ENCODE measurements at regions of chr21 and their contacts with region 1.

Region 1: DNA sequence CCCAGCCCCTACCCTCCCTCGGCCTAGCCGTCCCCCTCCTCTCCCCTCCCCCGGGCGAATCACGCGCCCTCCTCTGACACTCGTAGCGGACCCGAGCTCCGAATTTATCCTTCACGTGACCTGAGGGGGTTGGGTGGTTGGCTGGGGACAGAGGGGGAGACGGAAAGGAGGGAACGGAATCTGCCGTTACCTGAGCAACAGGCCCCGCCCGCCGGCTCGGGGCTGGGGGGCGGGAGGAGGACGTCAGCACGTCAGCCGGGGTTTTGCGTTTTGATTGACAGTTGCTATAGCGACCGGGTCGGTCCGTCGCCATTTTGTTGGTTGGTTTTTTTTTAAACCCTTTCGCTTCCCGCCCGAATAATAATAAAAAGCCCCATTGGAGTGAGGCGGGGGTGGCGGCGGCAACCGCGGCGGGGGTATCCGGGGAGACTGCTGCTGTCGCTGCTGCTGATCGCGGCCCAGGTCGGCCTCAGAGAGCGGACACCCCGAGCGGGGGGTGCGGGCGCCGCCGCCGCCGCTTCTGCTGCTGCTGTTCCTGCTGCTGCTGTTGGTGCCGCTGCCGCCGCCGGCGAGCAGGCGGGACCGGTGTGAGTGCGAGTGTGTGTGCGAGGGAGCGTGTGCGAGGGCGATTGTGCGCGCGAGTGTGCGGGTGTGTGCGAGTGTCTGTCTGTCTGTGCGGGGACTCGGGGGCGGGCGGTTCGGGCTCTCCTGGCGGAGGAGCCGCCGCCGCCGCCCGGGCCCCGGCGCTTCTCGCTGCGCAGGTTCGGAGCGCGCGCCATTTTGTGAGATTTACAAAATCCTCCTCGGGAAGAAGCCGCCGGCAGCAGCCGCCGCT is at the start of gene DYRK1A:
- DNase-seq: peak; percentile 98 to 100 (median 99)
- ATAC-seq: peak; percentile 89 to 93 (median 90)
- H3K4me3 ChIP-seq: peak within 1 kb of the TSS; percentile 75 to 90 (median 81)
- H3K27ac ChIP-seq: peak within 1 kb of the TSS; percentile 100
- H3K4me1 ChIP-seq: peaks cover 0 to 37% (median 12%) of the 10 kb centered on the region in 4 donors
- H3K27me3 ChIP-seq: no peaks in the 10 kb centered on the region
- CTCF ChIP-seq: no peak
- POLR2A ChIP-seq: peak; percentile 80
- total RNA-seq, gene DYRK1A: 20.6 to 32.5 (median 25.7) TPM

Region 2: DNA sequence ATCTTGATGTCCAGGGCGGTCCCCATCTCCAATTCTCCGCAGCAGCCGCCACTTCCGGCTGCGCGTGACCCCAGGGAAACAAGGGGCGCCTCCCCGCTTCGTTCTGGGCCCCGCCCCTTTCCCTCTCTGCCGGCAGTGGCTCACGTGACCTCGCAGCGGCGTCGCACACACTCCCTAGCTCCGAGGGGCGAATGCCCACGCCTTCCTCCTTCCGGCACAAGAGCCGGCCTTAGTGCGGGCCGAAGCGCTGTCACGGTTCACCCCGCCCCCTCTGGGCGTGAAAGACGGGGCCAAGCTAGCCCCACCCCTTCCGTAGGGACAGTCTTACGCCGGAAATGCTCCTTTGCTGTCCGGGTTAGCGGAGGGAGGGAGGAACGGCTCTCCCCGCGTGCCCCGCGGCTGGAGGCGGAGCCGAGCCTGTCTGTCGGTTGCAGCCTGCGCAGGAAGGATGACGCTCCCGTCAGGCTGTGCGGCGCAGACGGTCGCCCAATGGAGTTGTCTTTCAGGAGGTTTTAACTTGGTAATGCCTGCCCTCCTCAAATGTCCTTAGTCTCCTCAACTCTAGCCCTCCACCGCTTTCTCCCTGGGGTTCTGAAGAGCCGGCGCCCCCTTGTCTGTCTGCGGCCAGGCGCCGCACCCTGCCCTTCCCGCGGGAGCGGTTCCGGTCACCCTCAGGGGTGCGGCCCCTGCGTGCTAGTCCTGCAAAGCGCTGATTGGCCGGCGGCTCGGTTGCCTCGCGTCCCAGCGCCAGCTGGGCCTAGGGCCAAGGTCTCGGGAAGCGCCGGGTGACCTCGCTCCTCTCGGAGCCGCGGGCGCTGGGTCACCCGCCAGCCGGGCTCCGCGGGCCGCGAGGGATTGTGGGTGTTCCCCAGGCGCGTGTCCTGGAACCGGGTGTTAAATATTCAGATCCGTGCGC is 99.2 kb before region 1 on chr21 and contains the start of gene VPS26C:
- intact Hi-C with region 1: loop called in 1 of 2 experiments (anchors 10 kb)
- DNase-seq: peak; percentile 99 to 100 (median 99)
- ATAC-seq: peak; percentile 93 to 97 (median 93)
- H3K4me3 ChIP-seq: peak within 1 kb of the TSS; percentile 77 to 88 (median 84)
- H3K27ac ChIP-seq: peak within 1 kb of the TSS; percentile 96 to 97 (median 97)
- H3K4me1 ChIP-seq: peaks cover 0 to 7% (median 1%) of the 10 kb centered on the region in 4 donors
- H3K27me3 ChIP-seq: no peaks in the 10 kb centered on the region
- CTCF ChIP-seq: no peak
- POLR2A ChIP-seq: peak; percentile 95
- total RNA-seq, gene VPS26C: 27.4 to 52.3 (median 31.3) TPM

Region 3: GRCh38 chr21:37292941-37293340 is 73.8 kb before region 1 on chr21:
- intact Hi-C with region 1: no loop called
- DNase-seq: no peak
- ATAC-seq: peak in 1 of 4 donors; percentile 36
- H3K4me3 ChIP-seq: no peak overlapping the region
- H3K27ac ChIP-seq: no peak overlapping the region
- H3K4me1 ChIP-seq: no peaks in the 10 kb centered on the region
- H3K27me3 ChIP-seq: no peaks in the 10 kb centered on the region
- CTCF ChIP-seq: no peak
- POLR2A ChIP-seq: no peak

Region 4: DNA sequence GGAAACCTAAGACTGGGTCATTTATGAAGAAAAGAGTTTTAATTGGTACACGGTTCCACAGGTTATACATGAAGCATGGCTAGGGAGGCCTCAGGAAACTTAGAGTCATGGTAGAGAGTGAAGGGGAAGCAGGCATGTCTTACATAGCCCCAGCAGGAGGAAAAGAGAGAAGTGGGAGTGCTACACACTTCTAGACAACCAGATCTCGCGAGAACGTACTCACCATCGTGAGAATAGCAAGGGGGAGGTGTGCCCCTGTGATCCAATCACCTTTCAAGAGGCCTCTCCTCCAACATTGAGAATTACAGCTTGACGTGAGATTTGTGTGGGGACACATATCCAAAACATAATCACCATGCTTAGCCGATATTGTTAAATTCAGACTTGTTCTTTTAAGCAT is 62.7 kb after region 1 on chr21:
- intact Hi-C with region 1: no loop called
- DNase-seq: no peak
- ATAC-seq: no peak
- H3K4me3 ChIP-seq: no peak overlapping the region
- H3K27ac ChIP-seq: peak overlapping the region in 1 of 3 donors; percentile 56
- H3K4me1 ChIP-seq: peaks cover 0 to 55% (median 21%) of the 10 kb centered on the region in 4 donors
- H3K27me3 ChIP-seq: no peaks in the 10 kb centered on the region
- CTCF ChIP-seq: no peak
- POLR2A ChIP-seq: no peak